ENCODE measurements at regions of chr16 and their contacts with region 1.

Region 1: GRCh38 chr16:87278191-87279095 is 38.7 kb downstream of the C16orf95 start:
- DNase-seq: peak; percentile 71 to 90 (median 83)
- H3K4me3 ChIP-seq: no peak overlapping the region
- H3K27ac ChIP-seq: no peak overlapping the region
- H3K4me1 ChIP-seq: no peaks in the 10 kb centered on the region
- H3K27me3 ChIP-seq: no peaks in the 10 kb centered on the region
- CTCF ChIP-seq: peak; percentile 74 to 92 (median 85)
- POLR2A ChIP-seq: no peak

Region 2: DNA sequence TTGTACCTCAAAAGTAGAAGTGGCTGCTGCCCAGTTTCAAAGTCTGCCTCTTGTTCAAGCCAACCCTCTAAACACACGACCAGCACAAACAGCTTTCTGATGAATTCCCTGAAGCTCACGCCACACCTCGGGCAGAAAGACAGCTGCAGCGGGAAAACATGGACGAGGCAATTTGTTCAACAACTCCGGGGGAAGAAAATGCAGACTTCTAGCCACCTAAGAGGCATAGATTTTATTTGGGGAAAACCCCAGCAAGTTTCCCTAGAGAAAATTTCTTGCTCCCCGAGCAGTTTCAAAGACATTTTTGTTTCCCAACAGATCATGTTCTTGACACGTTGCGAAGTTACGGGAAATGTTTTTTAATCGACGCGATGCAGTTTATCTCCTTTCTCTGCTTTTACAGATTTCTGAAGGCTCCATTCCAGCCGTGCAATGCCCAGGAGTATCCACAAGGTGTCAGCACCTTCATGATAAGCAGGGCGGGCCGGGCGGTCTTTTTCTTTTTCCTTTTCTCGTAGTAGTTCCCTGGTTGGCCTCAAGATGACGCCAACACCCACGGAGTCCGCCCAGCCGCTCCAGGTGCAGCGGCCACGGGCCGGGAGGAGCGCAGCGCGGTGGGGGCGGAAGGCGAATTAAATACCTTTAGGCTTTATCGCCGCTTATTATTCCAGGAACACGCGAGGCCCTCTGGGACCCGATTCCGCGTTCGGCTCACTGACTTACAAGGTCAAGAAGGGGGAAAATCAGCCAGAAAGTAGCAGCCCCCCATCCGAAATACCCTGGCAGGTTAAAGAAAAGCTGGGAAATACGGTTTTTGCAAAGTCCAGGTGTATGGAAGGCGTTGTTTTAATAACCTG is 714.7 kb before region 1 on chr16:
- intact Hi-C with region 1: loop called (anchors 2 to 10 kb)
- DNase-seq: peak; percentile 86 to 98 (median 95)
- H3K4me3 ChIP-seq: peak overlapping the region in 1 of 4 donors; percentile 38
- H3K27ac ChIP-seq: peak overlapping the region in 2 of 5 donors; percentile 37 to 52
- H3K4me1 ChIP-seq: peaks cover 0 to 6% of the 10 kb centered on the region in 2 donors
- H3K27me3 ChIP-seq: peaks cover 50% of the 10 kb centered on the region
- CTCF ChIP-seq: peak; percentile 100
- POLR2A ChIP-seq: no peak

Region 3: DNA sequence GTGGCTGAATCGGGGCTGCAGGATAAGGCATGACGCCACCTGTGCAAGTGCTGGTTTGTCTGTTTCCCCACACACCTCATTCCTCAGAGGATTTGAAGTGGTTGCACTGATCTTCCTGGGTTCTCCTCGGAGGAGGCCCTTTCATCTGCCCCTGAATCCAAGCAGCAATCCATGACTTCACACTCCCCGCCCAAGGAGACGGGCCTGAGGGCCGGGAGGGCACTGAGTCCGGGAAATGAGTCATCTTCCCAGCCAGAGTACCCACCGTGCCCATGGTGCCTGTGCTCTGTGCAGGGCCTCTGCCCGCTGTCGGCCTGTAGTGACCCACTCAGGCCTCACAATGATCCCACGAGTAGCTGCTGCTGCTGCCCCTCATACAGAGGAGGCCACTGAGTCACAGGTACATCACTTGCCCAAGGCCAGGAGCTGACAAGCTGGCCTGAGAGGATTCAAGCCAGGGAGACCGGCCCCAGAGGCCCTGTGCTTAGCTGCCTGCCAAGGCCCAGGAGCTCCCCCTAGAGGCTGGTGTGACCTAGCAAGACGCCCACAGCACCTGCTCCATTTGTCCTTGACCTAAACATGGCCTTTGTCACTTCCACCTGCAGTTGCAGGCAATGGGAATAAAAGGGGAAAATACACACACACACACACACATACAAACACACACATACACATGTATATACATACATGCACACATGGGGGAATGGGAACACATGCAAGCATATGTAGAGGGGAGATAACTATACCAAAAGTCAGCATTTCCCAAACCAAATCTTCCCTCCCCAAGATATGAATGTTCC is 201.3 kb before region 1 on chr16:
- intact Hi-C with region 1: loop called in 1 of 2 experiments (anchors 10 kb)
- DNase-seq: peak in 6 of 7 donors; percentile 25 to 69 (median 48)
- H3K4me3 ChIP-seq: no peak overlapping the region
- H3K27ac ChIP-seq: no peak overlapping the region
- H3K4me1 ChIP-seq: no peaks in the 10 kb centered on the region
- H3K27me3 ChIP-seq: no peaks in the 10 kb centered on the region
- CTCF ChIP-seq: peak; percentile 6 to 54 (median 37)
- POLR2A ChIP-seq: no peak

Region 4: DNA sequence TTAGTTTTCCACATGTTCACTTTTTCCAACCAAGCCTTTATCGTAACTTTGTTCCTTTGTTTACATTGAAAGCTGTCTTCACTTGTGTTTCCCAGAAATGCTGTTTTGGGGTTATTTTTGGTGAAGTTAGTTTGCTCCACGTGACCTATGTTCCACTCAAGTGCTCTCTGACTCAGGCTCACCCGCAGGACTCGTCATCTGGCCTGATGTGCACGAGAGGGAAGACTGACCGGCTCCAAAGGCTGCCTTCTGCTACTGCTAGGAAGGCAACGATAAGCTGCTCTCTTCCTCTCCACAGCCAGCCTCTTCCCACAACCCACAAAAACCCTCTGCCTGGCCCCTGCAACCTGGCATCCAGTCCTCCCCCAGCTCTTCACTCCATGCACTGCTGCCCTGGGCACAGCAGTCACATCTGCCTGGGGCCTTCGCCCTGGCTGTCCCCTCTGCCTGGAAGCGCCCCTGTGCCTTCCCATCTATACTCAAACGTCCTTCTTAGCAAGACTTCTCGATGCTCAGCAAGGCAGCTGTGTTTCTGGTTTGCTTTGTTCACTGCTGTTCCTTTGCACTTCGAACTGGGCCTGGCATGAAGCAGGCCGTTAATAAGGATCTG is 186.4 kb after region 1 on chr16:
- intact Hi-C with region 1: no loop called
- DNase-seq: peak; percentile 81 to 95 (median 92)
- H3K4me3 ChIP-seq: peak overlapping the region in 1 of 4 donors; percentile 20
- H3K27ac ChIP-seq: peak overlapping the region; percentile 96 to 100 (median 98)
- H3K4me1 ChIP-seq: peaks cover 55 to 71% of the 10 kb centered on the region in 2 donors
- H3K27me3 ChIP-seq: no peaks in the 10 kb centered on the region
- CTCF ChIP-seq: no peak
- POLR2A ChIP-seq: peak; percentile 39 to 70